Activated B cell treated with CpG ODN at 0.5 μM for 24 hours (primary cell): ENCODE measurements at regions of chr22 and their contacts with region 1.

Region 1: GRCh38 chr22:16789860-16790493 is 35.2 kb downstream of the XKR3 start:
- DNase-seq: no peak
- ATAC-seq: no peak
- H3K4me3 Mint-ChIP-seq: no peak overlapping the region
- H3K27ac Mint-ChIP-seq: no peak overlapping the region
- H3K4me1 Mint-ChIP-seq: no peaks in the 10 kb centered on the region
- H3K27me3 Mint-ChIP-seq: no peaks in the 10 kb centered on the region
- CTCF ChIP-seq: no peak

Region 2: DNA sequence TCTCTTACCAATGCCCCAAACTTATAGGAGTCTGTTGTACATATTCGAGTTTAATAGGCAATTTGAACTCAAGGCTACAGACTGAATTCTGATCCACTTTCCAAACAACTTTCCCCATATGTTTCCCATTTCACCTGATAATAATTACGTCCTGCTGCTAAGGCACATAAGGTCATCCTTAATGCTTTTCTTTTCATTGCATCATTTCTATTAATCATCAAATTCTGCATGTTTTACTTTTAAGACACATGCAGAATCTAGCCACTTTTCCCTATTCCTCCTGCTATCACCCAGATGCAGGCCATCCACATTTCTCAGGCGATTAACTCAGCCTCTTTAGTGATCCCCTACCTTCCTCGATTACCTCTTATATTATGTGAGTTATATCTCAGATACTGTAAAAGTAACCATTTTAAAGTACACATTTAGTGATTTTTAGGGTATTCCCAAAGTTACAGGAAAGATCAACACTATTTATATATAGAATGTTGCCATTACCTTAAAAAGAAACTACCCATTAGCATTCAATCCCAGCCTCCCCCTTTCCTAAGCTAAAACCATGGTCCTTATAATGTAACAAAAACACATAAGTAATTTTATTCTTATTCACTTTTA is 20.3 kb after region 1 on chr22:
- CTCF ChIA-PET with region 1: no interaction called
- POLR2A ChIA-PET with region 1: no interaction called
- intact Hi-C with region 1: no loop called
- DNase-seq: no peak
- ATAC-seq: no peak
- H3K4me3 Mint-ChIP-seq: no peak overlapping the region
- H3K27ac Mint-ChIP-seq: no peak overlapping the region
- H3K4me1 Mint-ChIP-seq: peaks cover 30% of the 10 kb centered on the region
- H3K27me3 Mint-ChIP-seq: no peaks in the 10 kb centered on the region
- CTCF ChIP-seq: no peak

Region 3: DNA sequence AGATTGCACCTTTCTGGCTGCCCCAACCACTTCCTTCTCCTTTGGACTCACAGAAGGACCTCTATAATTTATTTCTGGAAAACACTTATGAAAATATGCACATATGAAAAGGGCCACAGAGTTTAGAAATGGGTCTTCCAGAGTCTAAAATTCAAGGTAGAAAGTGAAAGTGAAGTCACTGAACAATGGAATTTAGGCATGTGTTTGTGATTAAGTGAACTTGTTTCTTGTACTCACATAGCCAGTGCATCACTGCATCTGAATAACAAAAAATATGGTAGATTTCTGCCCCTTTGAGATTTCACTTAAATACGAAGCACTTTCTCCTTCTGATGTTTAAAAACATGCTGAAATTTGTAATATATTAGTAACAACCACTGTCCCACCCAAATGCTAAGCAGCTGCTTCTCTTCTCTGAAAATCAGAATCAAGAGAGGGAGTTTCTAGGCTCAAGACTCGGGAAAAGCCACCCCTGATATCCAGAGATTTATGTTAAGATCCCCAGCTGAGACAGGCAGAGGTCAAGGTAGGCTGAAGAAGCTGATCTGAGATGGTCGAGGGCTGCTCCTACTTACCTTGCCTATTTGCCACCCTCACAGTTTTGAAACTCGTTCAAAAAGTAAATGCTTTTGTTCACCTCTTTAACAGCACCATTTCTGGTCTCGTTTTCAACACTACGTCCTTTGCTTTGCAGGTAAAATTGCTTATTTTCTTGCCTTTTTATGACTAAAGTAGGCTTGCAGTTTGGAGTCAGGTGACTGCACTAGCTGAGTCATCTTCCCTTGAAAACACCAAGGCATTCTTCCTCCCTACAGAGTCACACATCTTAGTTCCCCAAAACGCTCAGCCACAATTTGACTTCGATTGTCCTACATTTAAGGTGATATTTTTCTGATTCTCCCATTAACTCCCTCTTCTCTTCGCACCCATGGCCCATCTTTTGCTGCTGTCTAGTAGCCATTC is 35.0 kb after region 1 on chr22 and contains the start of gene XKR3:
- CTCF ChIA-PET with region 1: no interaction called
- POLR2A ChIA-PET with region 1: no interaction called
- intact Hi-C with region 1: loop called (anchors 2 kb)
- DNase-seq: no peak
- ATAC-seq: peak; percentile 71
- H3K4me3 Mint-ChIP-seq: peak within 1 kb of the TSS; percentile 68
- H3K27ac Mint-ChIP-seq: peak within 1 kb of the TSS; percentile 60
- H3K4me1 Mint-ChIP-seq: peaks cover 21% of the 10 kb centered on the region
- H3K27me3 Mint-ChIP-seq: no peaks in the 10 kb centered on the region
- CTCF ChIP-seq: no peak
- total RNA-seq, gene XKR3: 0.13 TPM in 1 of 2 replicates, not detected in the other

Region 4: GRCh38 chr22:17064498-17065100 is 274.6 kb after region 1 on chr22:
- CTCF ChIA-PET with region 1: no interaction called
- POLR2A ChIA-PET with region 1: no interaction called
- intact Hi-C with region 1: no loop called
- DNase-seq: no peak
- ATAC-seq: no peak
- H3K4me3 Mint-ChIP-seq: no peak overlapping the region
- H3K27ac Mint-ChIP-seq: no peak overlapping the region
- H3K4me1 Mint-ChIP-seq: peaks cover 2% of the 10 kb centered on the region
- H3K27me3 Mint-ChIP-seq: no peaks in the 10 kb centered on the region
- CTCF ChIP-seq: no peak